WTC11 (cell line): ENCODE measurements at regions of chr5 and their contacts with region 1.

Region 1: DNA sequence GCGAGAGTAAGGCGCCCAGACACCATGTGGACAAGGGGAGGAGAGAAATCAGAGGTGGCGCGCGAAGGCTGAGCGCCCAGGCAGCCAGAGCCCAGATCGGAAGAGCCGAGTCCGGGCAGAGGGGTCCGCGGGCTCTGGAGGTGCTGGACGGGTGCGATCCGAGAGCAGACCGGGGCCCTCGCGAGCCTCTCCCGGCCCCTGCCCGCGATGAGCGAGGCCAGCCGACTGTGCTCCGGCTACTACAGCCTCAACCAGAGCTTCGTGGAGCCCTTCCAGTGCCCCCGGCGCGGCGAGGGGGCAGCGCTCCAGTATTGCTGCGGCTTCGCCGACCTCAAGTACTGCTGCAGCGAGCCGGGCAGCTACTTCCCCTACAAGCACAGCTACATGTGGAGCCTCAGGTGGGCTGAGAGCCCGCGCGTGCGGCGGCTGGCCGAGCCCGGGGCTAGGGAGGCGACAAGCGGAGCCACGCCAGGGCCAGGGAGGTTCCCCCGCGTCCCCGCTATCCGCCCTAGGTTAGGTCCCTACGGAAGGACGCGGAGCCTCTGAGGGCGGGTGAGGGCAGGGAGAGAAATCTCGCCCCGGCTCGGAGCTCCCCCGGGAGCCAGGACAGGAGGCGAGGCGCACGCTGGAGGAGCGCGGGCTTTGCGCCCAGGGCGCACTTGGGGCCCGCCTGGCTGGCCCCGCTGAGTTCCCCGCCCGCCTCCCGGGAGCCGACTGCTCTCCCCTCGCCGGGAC is at the start of gene SHISAL2B:
- DNase-seq: peak; percentile 68
- ATAC-seq: peak; percentile 72
- H3K4me3 Mint-ChIP-seq: peak within 1 kb of the TSS; percentile 85
- H3K27ac Mint-ChIP-seq: peak within 1 kb of the TSS; percentile 85
- H3K4me1 Mint-ChIP-seq: peaks cover 48% of the 10 kb centered on the region
- H3K27me3 Mint-ChIP-seq: peaks cover 15% of the 10 kb centered on the region
- CTCF ChIP-seq: no peak
- total RNA-seq, gene SHISAL2B: 11.1 to 15.2 TPM (median 14.8 TPM) in 3 replicates

Region 2: DNA sequence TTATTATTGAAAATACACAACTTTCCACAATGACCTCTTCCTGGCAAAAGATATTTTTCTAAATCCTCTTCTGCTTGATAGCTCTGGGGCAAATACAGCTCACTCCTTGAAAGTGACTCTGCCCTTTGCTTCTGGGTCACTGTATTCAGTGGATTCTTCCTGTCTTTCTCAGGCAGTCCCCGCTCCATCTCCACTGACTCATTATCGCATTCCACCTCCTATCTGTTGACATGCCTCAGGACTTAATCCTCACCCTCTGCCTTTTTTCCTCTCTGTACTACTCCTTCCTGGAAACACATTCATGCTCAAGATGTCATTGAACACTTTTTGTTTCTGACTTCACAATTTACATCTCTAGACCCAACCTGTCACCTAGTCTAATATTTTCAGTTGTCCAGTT is 193.2 kb before region 1 on chr5:
- CTCF ChIA-PET with region 1: no interaction called
- POLR2A ChIA-PET with region 1: no interaction called
- DNase-seq: no peak
- ATAC-seq: peak; percentile 82
- H3K4me3 Mint-ChIP-seq: no peak overlapping the region
- H3K27ac Mint-ChIP-seq: no peak overlapping the region
- H3K4me1 Mint-ChIP-seq: peaks cover 18% of the 10 kb centered on the region
- H3K27me3 Mint-ChIP-seq: no peaks in the 10 kb centered on the region
- CTCF ChIP-seq: no peak

Region 3: DNA sequence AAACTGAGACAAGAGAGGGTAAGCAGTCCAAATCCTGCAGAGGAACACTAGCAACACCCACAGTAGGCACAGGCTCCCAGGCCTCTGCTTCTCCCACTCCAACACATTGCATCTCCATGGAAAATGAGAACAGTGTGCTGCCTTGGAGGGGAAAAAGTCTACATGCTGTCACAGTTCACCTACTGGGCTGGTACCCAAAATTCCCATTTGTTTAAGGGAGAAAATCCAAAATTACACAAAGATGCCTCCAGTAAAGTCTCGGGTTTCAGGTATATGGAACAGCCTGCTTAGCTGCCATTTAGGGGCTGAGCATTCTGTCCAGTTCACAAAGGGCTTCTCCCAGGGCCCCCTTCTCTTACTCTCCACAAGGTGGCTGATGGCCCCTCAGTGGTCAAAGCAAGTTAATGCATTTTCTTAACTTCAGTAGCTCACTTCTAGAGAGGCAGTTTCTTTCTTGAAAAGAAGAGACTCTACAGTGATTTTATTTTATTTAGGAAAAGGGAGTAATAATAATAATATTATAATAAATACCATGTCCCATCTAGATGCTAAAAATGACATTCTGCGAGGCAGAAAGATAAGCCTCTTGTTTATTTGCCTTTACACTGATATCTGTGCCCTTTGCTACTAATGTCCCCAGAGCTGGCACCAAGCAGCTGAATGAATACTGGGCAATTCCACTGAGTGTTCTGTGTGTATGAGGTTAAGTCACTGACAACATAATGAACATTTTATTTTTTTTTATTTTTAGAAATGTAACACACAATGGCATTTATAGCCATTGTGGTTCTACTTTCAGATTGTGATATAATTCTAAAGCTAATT is 95.3 kb before region 1 on chr5:
- CTCF ChIA-PET with region 1: no interaction called
- POLR2A ChIA-PET with region 1: no interaction called
- DNase-seq: peak; percentile 52
- ATAC-seq: peak; percentile 90
- H3K4me3 Mint-ChIP-seq: no peak overlapping the region
- H3K27ac Mint-ChIP-seq: no peak overlapping the region
- H3K4me1 Mint-ChIP-seq: peaks cover 23% of the 10 kb centered on the region
- H3K27me3 Mint-ChIP-seq: no peaks in the 10 kb centered on the region
- CTCF ChIP-seq: no peak

Region 4: GRCh38 chr5:64680289-64680688 is 10.3 kb before region 1 on chr5:
- CTCF ChIA-PET with region 1: interaction called, 22 read pairs
- POLR2A ChIA-PET with region 1: interaction called, 3 read pairs
- DNase-seq: peak; percentile 42
- ATAC-seq: peak; percentile 86
- H3K4me3 Mint-ChIP-seq: no peak overlapping the region
- H3K27ac Mint-ChIP-seq: no peak overlapping the region
- H3K4me1 Mint-ChIP-seq: peaks cover 16% of the 10 kb centered on the region
- H3K27me3 Mint-ChIP-seq: no peaks in the 10 kb centered on the region
- CTCF ChIP-seq: peak; percentile 21; the same call in 1 of the 2 replicates

Region 5: GRCh38 chr5:64768358-64769312 is 78.1 kb after region 1 on chr5 and contains the starts of genes CWC27 and SREK1IP1:
- CTCF ChIA-PET with region 1: no interaction called
- POLR2A ChIA-PET with region 1: interaction called, 12 read pairs
- DNase-seq: peak; percentile 84
- ATAC-seq: peak; percentile 96
- H3K4me3 Mint-ChIP-seq: peak within 1 kb of the TSS; percentile 100
- H3K27ac Mint-ChIP-seq: peak within 1 kb of the TSS; percentile 99
- H3K4me1 Mint-ChIP-seq: peaks cover 24% of the 10 kb centered on the region
- H3K27me3 Mint-ChIP-seq: no peaks in the 10 kb centered on the region
- CTCF ChIP-seq: no peak
- total RNA-seq, gene CWC27: 39.2 to 42.7 TPM (median 40.5 TPM) in 3 replicates
- total RNA-seq, gene SREK1IP1: 24.3 to 26.5 TPM (median 26.2 TPM) in 3 replicates